ENCODE measurements at regions of chr1 and their contacts with region 1.

Region 1: GRCh38 chr1:101002551-101002950 is 23.0 kb downstream of the DPH5 start:
- DNase-seq: no peak
- ATAC-seq: peak; percentile 57
- H3K4me3 ChIP-seq: no peak overlapping the region
- H3K4me3 Mint-ChIP-seq: peak overlapping the region in 7 of 10 donors; percentile 5 to 60 (median 29)
- H3K27ac ChIP-seq: no peak overlapping the region
- H3K27ac Mint-ChIP-seq: peak overlapping the region in 7 of 9 donors; percentile 41 to 95 (median 85)
- H3K4me1 ChIP-seq: peaks cover 28 to 47% of the 10 kb centered on the region in 2 donors
- H3K4me1 Mint-ChIP-seq: peaks cover 42 to 74% (median 56%) of the 10 kb centered on the region in 7 donors
- H3K27me3 ChIP-seq: no peaks in the 10 kb centered on the region
- H3K27me3 Mint-ChIP-seq: no peaks in the 10 kb centered on the region

Region 2: DNA sequence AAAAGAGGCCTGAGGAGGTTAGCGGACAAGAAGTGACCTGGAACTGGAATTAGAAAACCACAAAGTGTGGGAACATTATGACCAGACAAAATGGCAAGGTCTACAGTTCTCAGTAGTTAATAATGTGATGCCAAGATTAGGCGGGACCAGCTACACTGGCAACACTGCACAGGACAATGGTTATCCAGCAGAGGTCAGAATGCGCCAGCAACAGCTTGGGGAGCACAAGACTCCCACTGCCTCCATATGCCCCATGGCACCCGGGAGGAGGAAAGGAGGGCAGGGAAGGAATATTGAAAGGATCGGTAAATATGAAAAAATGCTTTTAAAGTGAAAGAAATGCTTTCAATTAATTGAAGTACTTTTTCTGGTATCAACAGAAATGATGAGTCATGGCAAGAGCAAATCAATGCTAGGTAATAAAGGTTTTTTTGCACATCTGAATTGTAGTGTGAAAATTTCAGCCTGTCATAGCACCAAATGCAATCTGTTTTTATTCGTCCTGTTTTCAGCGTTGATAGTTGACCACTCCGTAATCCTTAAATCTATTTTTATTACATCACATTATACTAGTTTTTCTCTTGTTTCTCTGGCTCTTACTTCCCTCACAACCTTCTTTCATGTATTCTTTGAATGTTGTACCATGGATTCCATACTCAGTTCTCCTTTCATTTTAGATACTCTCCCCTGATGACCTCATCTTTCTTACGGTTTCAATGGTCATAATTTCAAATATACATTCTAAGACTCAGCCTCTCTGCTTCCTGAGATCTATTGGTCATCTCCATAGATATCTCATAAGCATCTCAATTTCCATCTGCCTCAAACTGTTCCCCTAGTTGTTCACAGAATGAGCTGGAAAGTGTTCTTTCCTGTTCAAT is 252.3 kb before region 1 on chr1:
- CTCF ChIA-PET with region 1: no interaction called
- POLR2A ChIA-PET with region 1: no interaction called
- intact Hi-C with region 1: no loop called
- DNase-seq: no peak
- ATAC-seq: no peak
- H3K4me3 ChIP-seq: no peak overlapping the region
- H3K4me3 Mint-ChIP-seq: no peak overlapping the region
- H3K27ac ChIP-seq: no peak overlapping the region
- H3K27ac Mint-ChIP-seq: no peak overlapping the region
- H3K4me1 ChIP-seq: no peaks in the 10 kb centered on the region
- H3K4me1 Mint-ChIP-seq: no peaks in the 10 kb centered on the region
- H3K27me3 ChIP-seq: no peaks in the 10 kb centered on the region
- H3K27me3 Mint-ChIP-seq: peaks cover 4 to 23% (median 14%) of the 10 kb centered on the region in 5 donors

Region 3: GRCh38 chr1:100972185-100972584 is 30.4 kb before region 1 on chr1:
- CTCF ChIA-PET with region 1: no interaction called
- POLR2A ChIA-PET with region 1: interaction called, 4 read pairs
- intact Hi-C with region 1: loop called in 1 of 2 experiments (anchors 5 kb)
- DNase-seq: no peak
- ATAC-seq: no peak
- H3K4me3 ChIP-seq: no peak overlapping the region
- H3K4me3 Mint-ChIP-seq: peak overlapping the region in 2 of 10 donors; percentile 11 to 44
- H3K27ac ChIP-seq: no peak overlapping the region
- H3K27ac Mint-ChIP-seq: peak overlapping the region in 5 of 9 donors; percentile 10 to 74 (median 31)
- H3K4me1 ChIP-seq: peaks cover 0 to 19% of the 10 kb centered on the region in 2 donors
- H3K4me1 Mint-ChIP-seq: peaks cover 15 to 73% (median 55%) of the 10 kb centered on the region in 7 donors
- H3K27me3 ChIP-seq: no peaks in the 10 kb centered on the region
- H3K27me3 Mint-ChIP-seq: no peaks in the 10 kb centered on the region

Region 4: DNA sequence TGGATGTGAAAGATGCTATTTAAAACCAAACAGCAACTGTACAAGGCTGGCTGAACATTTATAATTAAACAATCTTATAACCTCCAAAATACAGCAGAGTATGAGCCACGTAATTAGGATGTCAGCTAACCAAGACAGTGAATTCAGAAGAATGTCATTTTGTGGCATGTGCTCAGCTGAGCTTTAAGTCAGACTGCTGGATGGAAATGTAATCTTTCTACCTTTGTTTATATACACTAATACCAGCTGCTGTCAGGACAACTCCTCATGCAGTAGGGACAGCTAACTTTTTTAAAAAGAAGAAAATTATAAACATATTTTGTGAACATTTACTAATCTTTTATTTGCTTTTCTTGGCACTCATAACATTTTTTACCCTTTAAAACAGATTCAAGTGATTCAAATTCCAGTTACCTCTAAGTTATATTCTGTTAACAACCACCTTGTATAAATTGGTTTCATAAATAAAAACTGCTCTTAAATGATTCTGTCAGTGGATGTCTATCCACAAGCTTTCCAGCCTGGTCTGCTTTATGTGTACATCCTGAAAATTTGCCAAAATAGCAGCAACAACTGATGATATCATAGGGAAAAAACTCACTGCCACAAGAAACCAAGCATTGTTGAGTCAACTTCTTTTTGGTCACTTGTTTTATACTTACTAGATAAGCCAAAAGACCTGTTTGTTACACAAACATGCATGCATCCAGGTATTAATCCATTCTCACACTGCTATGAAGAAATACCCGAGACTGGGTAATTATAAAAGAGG is 13.1 kb before region 1 on chr1:
- CTCF ChIA-PET with region 1: interaction called, 4 read pairs
- POLR2A ChIA-PET with region 1: interaction called, 14 read pairs
- intact Hi-C with region 1: loop called in 1 of 2 experiments (anchors 2 kb)
- DNase-seq: no peak
- ATAC-seq: no peak
- H3K4me3 ChIP-seq: no peak overlapping the region
- H3K4me3 Mint-ChIP-seq: no peak overlapping the region
- H3K27ac ChIP-seq: no peak overlapping the region
- H3K27ac Mint-ChIP-seq: peak overlapping the region in 5 of 9 donors; percentile 21 to 79 (median 43)
- H3K4me1 ChIP-seq: peaks cover 0 to 2% of the 10 kb centered on the region in 2 donors
- H3K4me1 Mint-ChIP-seq: peaks cover 0 to 38% (median 25%) of the 10 kb centered on the region in 7 donors
- H3K27me3 ChIP-seq: no peaks in the 10 kb centered on the region
- H3K27me3 Mint-ChIP-seq: no peaks in the 10 kb centered on the region

Region 5: DNA sequence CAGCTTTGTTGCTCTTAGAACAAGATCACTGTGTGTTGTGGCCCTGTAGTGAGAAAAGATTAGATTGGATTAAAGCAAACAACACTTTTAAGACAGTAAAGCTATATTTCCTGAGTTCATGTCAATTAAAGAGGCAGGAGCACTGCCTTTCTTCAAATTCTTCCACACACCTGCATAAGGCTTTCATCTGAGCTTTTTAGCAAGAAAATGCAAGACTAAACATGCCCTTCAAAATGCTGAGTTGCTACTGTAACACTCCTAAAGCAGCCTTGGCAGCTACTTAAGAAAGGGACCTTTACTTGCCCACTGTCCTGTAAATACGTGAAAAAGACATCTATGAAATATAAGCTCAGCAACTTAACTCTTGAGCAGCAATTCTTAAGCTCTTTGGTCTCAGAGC is 11.2 kb after region 1 on chr1:
- CTCF ChIA-PET with region 1: no interaction called
- POLR2A ChIA-PET with region 1: interaction called, 15 read pairs
- intact Hi-C with region 1: no loop called
- DNase-seq: no peak
- ATAC-seq: no peak
- H3K4me3 ChIP-seq: no peak overlapping the region
- H3K4me3 Mint-ChIP-seq: peak overlapping the region in 2 of 10 donors; percentile 23 to 36
- H3K27ac ChIP-seq: no peak overlapping the region
- H3K27ac Mint-ChIP-seq: peak overlapping the region in 3 of 9 donors; percentile 12 to 55 (median 43)
- H3K4me1 ChIP-seq: no peaks in the 10 kb centered on the region
- H3K4me1 Mint-ChIP-seq: peaks cover 7 to 62% (median 36%) of the 10 kb centered on the region in 7 donors
- H3K27me3 ChIP-seq: no peaks in the 10 kb centered on the region
- H3K27me3 Mint-ChIP-seq: no peaks in the 10 kb centered on the region

Region 6: GRCh38 chr1:101043776-101044175 is 41.2 kb after region 1 on chr1:
- CTCF ChIA-PET with region 1: no interaction called
- POLR2A ChIA-PET with region 1: no interaction called
- intact Hi-C with region 1: loop called in 1 of 2 experiments (anchors 5 kb)
- DNase-seq: no peak
- ATAC-seq: no peak
- H3K4me3 ChIP-seq: no peak overlapping the region
- H3K4me3 Mint-ChIP-seq: no peak overlapping the region
- H3K27ac ChIP-seq: no peak overlapping the region
- H3K27ac Mint-ChIP-seq: no peak overlapping the region
- H3K4me1 ChIP-seq: no peaks in the 10 kb centered on the region
- H3K4me1 Mint-ChIP-seq: peaks cover 2 to 15% (median 13%) of the 10 kb centered on the region in 7 donors
- H3K27me3 ChIP-seq: no peaks in the 10 kb centered on the region
- H3K27me3 Mint-ChIP-seq: no peaks in the 10 kb centered on the region

Region 7: DNA sequence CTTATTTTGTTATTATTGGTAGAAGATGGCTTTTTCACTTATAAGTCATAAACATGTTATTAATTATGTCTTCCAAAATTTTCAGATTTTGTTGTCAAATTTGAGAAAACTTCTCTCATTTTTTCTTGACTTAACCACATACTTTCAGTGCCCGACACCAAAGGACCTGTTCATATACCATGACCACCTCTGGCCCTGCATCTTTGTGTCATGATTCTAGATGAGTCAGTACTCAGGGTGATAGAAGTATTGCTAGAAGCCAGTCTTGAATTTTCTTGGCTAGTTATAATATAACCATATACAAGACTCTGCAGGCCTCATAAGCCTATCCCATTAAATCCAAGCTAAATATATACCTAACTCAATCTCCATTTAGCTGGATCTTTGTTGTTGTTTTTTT is 58.4 kb after region 1 on chr1:
- CTCF ChIA-PET with region 1: no interaction called
- POLR2A ChIA-PET with region 1: interaction called, 3 read pairs
- intact Hi-C with region 1: loop called in 1 of 2 experiments (anchors 5 kb)
- DNase-seq: no peak
- ATAC-seq: no peak
- H3K4me3 ChIP-seq: no peak overlapping the region
- H3K4me3 Mint-ChIP-seq: no peak overlapping the region
- H3K27ac ChIP-seq: no peak overlapping the region
- H3K27ac Mint-ChIP-seq: peak overlapping the region in 1 of 9 donors; percentile 68
- H3K4me1 ChIP-seq: peaks cover 0 to 12% of the 10 kb centered on the region in 2 donors
- H3K4me1 Mint-ChIP-seq: peaks cover 12 to 50% (median 39%) of the 10 kb centered on the region in 7 donors
- H3K27me3 ChIP-seq: no peaks in the 10 kb centered on the region
- H3K27me3 Mint-ChIP-seq: no peaks in the 10 kb centered on the region

Region 8: DNA sequence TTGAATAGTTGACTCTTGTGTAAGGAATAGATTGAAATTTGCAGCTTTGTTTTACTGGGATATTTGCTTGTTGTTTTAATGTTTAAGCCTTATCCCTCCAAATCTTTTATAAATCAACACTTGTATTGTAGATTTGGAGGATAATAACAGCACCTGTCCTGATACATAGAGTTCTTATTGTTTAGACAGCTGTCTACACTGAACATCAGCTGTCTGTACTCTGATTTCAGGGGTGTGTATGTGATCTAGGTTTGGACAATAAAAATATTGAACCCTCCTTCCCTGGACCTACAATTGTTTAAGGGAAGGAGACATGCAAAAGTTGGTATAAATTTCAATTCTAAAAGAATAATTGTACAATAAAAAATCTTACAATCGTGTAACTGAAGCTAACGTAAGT is 71.3 kb after region 1 on chr1:
- CTCF ChIA-PET with region 1: no interaction called
- POLR2A ChIA-PET with region 1: no interaction called
- intact Hi-C with region 1: no loop called
- DNase-seq: no peak
- ATAC-seq: no peak
- H3K4me3 ChIP-seq: no peak overlapping the region
- H3K4me3 Mint-ChIP-seq: no peak overlapping the region
- H3K27ac ChIP-seq: no peak overlapping the region
- H3K27ac Mint-ChIP-seq: no peak overlapping the region
- H3K4me1 ChIP-seq: peaks cover 0 to 13% of the 10 kb centered on the region in 2 donors
- H3K4me1 Mint-ChIP-seq: peaks cover 12 to 45% (median 31%) of the 10 kb centered on the region in 7 donors
- H3K27me3 ChIP-seq: no peaks in the 10 kb centered on the region
- H3K27me3 Mint-ChIP-seq: no peaks in the 10 kb centered on the region

Region 9: DNA sequence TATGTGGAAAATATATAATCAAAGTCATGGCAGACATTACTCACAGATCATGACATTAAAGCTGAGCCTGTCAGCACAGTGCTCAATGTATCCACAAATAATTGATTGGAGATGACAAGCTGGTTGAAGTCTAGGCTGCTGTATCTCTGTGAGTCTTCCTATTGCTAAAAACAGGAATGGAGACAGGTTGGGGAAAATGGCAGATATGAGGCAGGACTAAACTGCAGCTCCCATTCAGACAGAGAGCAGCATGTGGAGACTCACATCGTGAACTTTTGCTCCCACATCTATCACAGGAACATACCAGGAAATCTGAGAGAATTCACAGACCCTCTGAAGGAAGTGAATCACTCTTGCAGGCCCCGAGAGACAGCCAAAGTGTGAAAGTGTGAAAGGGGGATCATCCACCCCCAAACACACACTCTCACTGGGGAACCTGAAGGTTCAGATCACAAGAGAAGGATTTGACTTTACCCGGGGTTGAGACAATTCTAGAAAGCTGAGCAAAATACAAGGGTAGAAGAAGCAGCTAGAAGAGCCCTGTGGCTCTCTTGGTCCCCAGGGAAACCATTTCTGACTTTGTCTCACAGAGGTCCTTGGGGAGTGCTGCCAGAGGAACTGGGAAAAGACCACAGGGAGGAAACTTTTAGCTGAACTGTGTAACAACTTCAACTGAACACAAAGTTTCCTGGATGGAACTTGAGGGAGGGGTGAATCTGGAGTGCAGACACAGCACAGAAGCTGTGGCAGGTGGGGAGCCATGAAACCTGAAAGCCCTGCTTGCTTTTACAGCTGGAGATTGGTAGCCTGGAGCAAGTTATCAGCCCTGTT is 407.7 kb after region 1 on chr1:
- CTCF ChIA-PET with region 1: no interaction called
- POLR2A ChIA-PET with region 1: no interaction called
- intact Hi-C with region 1: no loop called
- DNase-seq: no peak
- ATAC-seq: no peak
- H3K4me3 ChIP-seq: no peak overlapping the region
- H3K4me3 Mint-ChIP-seq: no peak overlapping the region
- H3K27ac ChIP-seq: no peak overlapping the region
- H3K27ac Mint-ChIP-seq: no peak overlapping the region
- H3K4me1 ChIP-seq: no peaks in the 10 kb centered on the region
- H3K4me1 Mint-ChIP-seq: peaks cover 0 to 5% (median 0%) of the 10 kb centered on the region in 7 donors
- H3K27me3 ChIP-seq: no peaks in the 10 kb centered on the region
- H3K27me3 Mint-ChIP-seq: peaks cover 0 to 44% (median 4%) of the 10 kb centered on the region in 5 donors

Measured in naive thymus-derived CD4-positive, alpha-beta T cell (primary cell).